ENCODE measurements at regions of chr5 and their contacts with region 1.

Region 1: GRCh38 chr5:150000256-150000989 is at the starts of genes HMGXB3 and TIGD6:
- DNase-seq: peak; percentile 59 to 88 (median 70)
- ATAC-seq: peak; percentile 78 to 86 (median 81)
- H3K4me3 ChIP-seq: peak within 1 kb of the TSS; percentile 55 to 87
- H3K4me3 Mint-ChIP-seq: peak within 1 kb of the TSS; percentile 87 to 89 (median 87)
- H3K27ac ChIP-seq: peak within 1 kb of the TSS; percentile 75
- H3K27ac Mint-ChIP-seq: peak within 1 kb of the TSS; percentile 90 to 93
- H3K4me1 ChIP-seq: peaks cover 7 to 28% of the 10 kb centered on the region in 2 experiments
- H3K4me1 Mint-ChIP-seq: peaks cover 46 to 55% (median 46%) of the 10 kb centered on the region in 3 donors
- H3K27me3 ChIP-seq: no peaks in the 10 kb centered on the region
- H3K27me3 Mint-ChIP-seq: no peaks in the 10 kb centered on the region
- total RNA-seq, gene HMGXB3: 28.9 to 35.2 (median 30.9) TPM
- total RNA-seq, gene TIGD6: 1.7 to 4.5 (median 4.0) TPM

Region 2: DNA sequence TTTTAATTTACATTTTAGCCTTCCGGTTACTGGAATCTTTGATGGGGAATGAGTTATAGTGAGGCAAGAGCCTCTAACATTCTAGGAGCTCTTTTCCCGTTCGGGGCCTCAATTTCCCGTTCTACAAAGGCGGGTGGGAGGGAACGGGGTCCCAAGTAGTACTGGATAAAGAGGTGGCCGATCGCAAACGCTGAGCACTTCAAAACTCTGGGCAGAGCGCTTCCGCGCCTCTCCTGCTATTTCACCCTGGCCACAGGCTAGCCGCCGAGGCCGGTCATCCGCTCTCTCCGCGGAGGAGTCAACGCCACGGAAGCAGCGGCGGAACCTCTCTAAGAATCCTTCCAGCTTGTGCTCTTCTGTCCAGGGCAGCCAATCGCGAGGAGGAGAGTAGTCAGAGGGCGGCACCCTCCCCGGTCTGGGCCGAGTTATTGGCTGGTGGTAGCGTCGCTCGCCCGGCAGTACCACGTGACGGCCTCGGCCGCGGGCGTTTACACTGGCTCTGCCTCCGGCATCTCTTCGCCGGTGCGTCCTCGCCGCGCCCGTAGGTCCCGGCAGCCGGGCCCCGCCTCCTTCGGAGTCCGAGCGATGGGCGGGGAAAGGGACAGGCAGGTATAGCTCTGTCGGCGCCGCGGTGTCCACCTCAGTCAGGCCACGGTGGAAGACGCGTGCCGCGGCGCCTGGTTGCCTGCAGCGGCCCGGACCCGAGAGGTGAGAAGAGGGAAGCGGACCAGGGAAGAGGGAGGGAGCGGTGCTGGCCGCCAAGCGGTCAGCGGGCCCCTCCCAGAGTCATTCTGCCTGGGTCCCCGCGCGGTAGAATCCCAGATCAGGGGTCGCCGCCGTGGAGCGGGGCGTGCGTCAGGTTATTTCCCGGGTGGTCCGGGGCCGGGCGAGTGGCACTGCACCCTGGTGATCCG is 39.9 kb before region 1 on chr5 and contains the start of gene SLC26A2:
- CTCF ChIA-PET with region 1: interaction called in 1 of 2 experiments, 13 read pairs
- POLR2A ChIA-PET with region 1: interaction called in 1 of 2 experiments, 6 read pairs
- DNase-seq: peak; percentile 84 to 96 (median 91)
- ATAC-seq: peak; percentile 99
- H3K4me3 ChIP-seq: peak within 1 kb of the TSS; percentile 62 to 96
- H3K4me3 Mint-ChIP-seq: peak within 1 kb of the TSS; percentile 87 to 96 (median 90)
- H3K27ac ChIP-seq: peak within 1 kb of the TSS; percentile 89
- H3K27ac Mint-ChIP-seq: peak within 1 kb of the TSS; percentile 96 to 97
- H3K4me1 ChIP-seq: peaks cover 6 to 21% of the 10 kb centered on the region in 2 experiments
- H3K4me1 Mint-ChIP-seq: peaks cover 35 to 37% (median 36%) of the 10 kb centered on the region in 3 donors
- H3K27me3 ChIP-seq: no peaks in the 10 kb centered on the region
- H3K27me3 Mint-ChIP-seq: no peaks in the 10 kb centered on the region
- total RNA-seq, gene SLC26A2: 5.2 to 11.0 (median 10.0) TPM

Measured in T-cell (primary cell).